Left ventricle myocardium inferior (tissue), 1 donor: ENCODE measurements at regions of chr3 and their contacts with region 1.

Region 1: GRCh38 chr3:127822698-127823425 is 547 bp upstream of the MGLL start:
- DNase-seq: peak; percentile 73
- H3K4me3 ChIP-seq: peak overlapping the region; percentile 95
- H3K27ac ChIP-seq: peak overlapping the region; percentile 96
- H3K4me1 ChIP-seq: peaks cover 54% of the 10 kb centered on the region
- H3K27me3 ChIP-seq: no peaks in the 10 kb centered on the region
- CTCF ChIP-seq: peak; percentile 52

Region 2: DNA sequence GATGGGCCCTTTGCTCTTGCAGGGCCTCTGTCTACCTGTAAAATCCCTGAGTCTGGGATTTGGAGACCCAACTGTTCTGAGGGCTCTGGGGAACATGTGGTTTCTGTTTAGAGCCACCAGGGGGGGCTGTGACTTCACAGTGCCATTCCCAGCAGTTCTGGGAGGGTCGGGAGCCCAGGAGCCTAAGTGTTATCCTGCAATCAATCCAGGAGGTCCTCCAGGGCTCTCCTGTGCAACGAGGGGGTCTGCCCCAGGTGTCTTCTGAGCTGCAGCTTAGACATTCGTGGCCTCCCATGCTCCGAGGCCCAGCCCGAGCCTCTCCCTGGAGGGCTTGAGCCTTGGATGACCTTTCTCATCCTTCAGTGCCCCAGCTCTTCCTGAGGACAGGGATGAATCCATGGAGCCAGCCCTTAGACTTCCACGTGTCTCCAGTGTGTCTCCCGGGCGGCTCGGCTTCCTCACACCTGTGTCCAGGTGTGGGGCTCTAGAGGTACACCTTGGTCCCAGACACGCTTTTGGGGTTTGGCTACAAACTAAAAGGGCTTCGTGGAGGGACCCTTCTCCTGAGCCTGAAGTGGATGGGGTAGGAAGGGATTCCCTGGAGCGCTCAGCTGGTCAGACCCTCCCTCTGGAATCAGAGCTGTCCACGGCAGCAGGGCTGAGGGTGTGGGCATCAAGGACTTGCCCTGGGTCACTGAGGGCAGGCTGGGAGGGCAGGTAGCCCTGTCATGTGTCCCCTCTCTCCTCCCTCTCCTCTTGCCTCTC is 170.4 kb before region 1 on chr3:
- intact Hi-C with region 1: loop called (anchors 5 kb)
- DNase-seq: peak; percentile 45
- H3K4me3 ChIP-seq: no peak overlapping the region
- H3K27ac ChIP-seq: no peak overlapping the region
- H3K4me1 ChIP-seq: peaks cover 5% of the 10 kb centered on the region
- H3K27me3 ChIP-seq: no peaks in the 10 kb centered on the region
- CTCF ChIP-seq: peak; percentile 96

Region 3: DNA sequence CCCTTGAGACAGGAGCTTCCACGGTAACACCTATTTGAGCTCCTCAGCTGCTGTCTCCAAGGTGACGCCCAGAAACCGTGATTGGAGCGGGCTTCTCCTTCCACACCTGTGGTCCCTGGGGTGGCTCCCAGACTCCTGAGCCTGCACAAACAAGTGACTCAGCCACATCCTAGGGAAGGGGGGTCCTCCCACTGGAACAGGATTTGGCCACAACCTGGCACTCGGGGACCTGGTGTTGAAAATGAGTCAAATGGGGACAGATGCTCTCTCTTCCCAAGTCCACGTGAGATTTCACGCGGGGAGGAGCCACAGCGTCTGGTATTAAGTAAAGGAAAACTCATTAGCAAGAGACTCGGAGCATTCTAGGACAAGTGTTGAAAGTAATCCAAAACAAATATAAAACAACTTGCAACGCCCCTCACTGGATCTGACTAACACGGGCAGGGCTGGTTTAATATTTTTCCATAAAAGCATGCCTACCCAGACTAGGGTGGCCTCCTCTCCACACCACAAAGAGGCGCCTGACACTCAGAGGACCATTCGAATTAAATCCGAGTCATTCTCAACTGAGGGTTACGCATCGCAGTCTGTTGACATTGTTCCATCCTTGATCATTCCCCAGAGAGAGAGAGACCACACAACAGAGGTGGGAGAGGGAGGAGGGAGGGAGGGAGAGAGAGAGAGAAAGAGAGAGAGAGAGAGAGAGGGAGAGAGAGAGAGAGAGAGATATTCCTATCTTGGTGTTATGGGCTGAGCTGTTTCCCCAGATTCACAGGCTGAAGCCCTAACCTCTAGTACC is 74.9 kb before region 1 on chr3:
- intact Hi-C with region 1: loop called (anchors 5 kb)
- DNase-seq: peak; percentile 76
- H3K4me3 ChIP-seq: peak overlapping the region; percentile 11
- H3K27ac ChIP-seq: peak overlapping the region; percentile 96
- H3K4me1 ChIP-seq: peaks cover 89% of the 10 kb centered on the region
- H3K27me3 ChIP-seq: no peaks in the 10 kb centered on the region
- CTCF ChIP-seq: peak; percentile 29

Region 4: GRCh38 chr3:127997961-127998360 is 175.1 kb after region 1 on chr3:
- intact Hi-C with region 1: no loop called
- DNase-seq: no peak
- H3K4me3 ChIP-seq: no peak overlapping the region
- H3K27ac ChIP-seq: no peak overlapping the region
- H3K4me1 ChIP-seq: no peaks in the 10 kb centered on the region
- H3K27me3 ChIP-seq: no peaks in the 10 kb centered on the region
- CTCF ChIP-seq: no peak

Region 5: DNA sequence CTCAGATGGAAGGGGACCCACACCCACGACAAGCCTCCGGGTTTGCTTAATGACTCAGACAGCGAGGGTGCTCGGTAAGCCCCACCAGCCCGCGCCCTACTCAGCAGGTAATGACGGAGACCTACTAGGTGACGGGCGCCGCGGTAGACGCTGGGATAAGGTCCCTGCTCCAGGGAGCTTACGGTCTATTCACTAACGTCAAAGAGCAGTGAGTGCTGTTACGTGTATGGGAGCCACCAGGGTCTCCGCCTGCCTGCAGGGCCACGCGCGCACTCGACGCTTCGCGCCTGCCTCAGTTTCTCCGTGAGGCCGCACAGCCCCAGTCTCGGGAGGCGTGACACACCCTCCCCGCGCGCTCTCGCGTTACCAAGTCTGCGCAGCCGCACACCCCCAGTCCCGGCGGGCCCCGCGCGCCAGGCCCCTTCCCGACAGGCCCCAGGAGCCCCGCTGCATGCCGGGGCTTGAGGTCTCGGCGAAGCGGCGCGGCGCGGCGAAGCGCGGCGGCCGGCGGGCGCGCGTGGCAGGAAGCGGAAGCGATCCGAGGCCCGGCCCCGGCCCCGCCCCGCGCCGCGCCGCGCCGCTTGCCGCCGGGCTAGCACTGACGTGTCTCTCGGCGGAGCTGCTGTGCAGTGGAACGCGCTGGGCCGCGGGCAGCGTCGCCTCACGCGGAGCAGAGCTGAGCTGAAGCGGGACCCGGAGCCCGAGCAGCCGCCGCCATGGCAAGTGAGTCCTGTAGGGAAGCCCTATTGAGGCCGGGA is 229.2 kb after region 1 on chr3 and contains the start of gene SEC61A1:
- intact Hi-C with region 1: no loop called
- DNase-seq: peak; percentile 95
- H3K4me3 ChIP-seq: peak within 1 kb of the TSS; percentile 97
- H3K27ac ChIP-seq: peak within 1 kb of the TSS; percentile 96
- H3K4me1 ChIP-seq: peaks cover 47% of the 10 kb centered on the region
- H3K27me3 ChIP-seq: no peaks in the 10 kb centered on the region
- CTCF ChIP-seq: no peak
- total RNA-seq, gene SEC61A1: 65.8 TPM